Pancreas (tissue), 10 donors: ENCODE measurements at regions of chr7 and their contacts with region 1.

Region 1: GRCh38 chr7:39465055-39465929 is 100.9 kb upstream of the YAE1 start:
- DNase-seq: peak in 4 of 6 donors; percentile 18 to 59 (median 32)
- ATAC-seq: peak; percentile 89 to 97 (median 94)
- H3K4me3 ChIP-seq: no peak overlapping the region
- H3K27ac ChIP-seq: no peak overlapping the region
- H3K4me1 ChIP-seq: no peaks in the 10 kb centered on the region
- H3K27me3 ChIP-seq: no peaks in the 10 kb centered on the region
- CTCF ChIP-seq: peak; percentile 46 to 80 (median 56)

Region 2: DNA sequence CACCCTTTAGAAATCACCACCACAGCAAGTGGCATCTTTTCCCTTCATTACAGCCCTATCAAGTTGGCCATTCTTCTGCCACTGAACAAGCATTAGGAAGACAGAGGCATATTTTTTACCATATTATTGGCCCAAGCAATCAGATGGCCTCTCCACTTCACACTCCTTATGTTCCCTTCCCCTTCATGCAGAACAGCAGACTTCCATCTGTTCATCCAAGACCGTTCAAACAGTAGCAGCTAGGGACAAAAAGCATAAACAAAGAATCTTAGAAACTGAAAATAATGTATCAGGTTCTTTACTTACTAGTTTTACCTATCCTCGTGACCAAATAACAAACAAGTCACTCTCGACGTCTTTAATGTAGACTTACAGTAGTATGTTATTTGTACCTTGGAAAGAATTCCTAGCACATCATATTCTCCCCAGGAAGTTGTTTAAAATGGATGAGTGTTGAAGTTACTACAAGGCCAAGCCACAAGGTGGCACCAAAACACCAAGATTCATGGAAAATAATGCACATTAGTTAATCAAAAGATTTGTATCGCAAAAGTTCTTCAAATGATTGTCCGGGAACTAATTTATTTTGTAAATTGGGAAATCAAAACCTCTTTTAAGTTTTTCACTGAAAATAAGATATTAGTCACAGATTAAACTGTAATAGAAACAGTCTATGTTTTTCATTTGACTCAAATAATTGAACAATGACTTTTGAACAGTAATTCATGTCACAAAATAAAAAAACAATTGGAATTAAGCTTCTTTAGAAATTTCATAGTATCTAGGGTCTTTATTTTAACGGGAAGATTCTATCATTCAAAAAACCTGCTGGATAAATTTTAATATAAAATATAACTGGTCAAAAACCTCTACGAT is 668.4 kb before region 1 on chr7:
- intact Hi-C with region 1: loop called in 2 of 3 experiments (anchors 10 kb)
- DNase-seq: peak in 4 of 6 donors; percentile 21 to 66 (median 24)
- ATAC-seq: peak; percentile 61 to 81 (median 80)
- H3K4me3 ChIP-seq: no peak overlapping the region
- H3K27ac ChIP-seq: no peak overlapping the region
- H3K4me1 ChIP-seq: no peaks in the 10 kb centered on the region
- H3K27me3 ChIP-seq: no peaks in the 10 kb centered on the region
- CTCF ChIP-seq: peak; percentile 32 to 64 (median 52)

Region 3: GRCh38 chr7:38932509-38933168 is 532.7 kb before region 1 on chr7:
- intact Hi-C with region 1: loop called in 2 of 3 experiments (anchors 5 to 10 kb)
- DNase-seq: peak; percentile 29 to 89 (median 61)
- ATAC-seq: peak; percentile 44 to 73 (median 58)
- H3K4me3 ChIP-seq: no peak overlapping the region
- H3K27ac ChIP-seq: no peak overlapping the region
- H3K4me1 ChIP-seq: no peaks in the 10 kb centered on the region
- H3K27me3 ChIP-seq: no peaks in the 10 kb centered on the region
- CTCF ChIP-seq: peak; percentile 68 to 83 (median 78)

Region 4: GRCh38 chr7:38938001-38938485 is 527.2 kb before region 1 on chr7:
- intact Hi-C with region 1: loop called in 2 of 3 experiments (anchors 5 to 10 kb)
- DNase-seq: no peak
- ATAC-seq: no peak
- H3K4me3 ChIP-seq: no peak overlapping the region
- H3K27ac ChIP-seq: no peak overlapping the region
- H3K4me1 ChIP-seq: no peaks in the 10 kb centered on the region
- H3K27me3 ChIP-seq: no peaks in the 10 kb centered on the region
- CTCF ChIP-seq: no peak